OCI-LY7 (cell line): ENCODE measurements at regions of chr19 and their contacts with region 1.

Region 1: GRCh38 chr19:34336781-34337271 is 28.2 kb upstream of the GPI start:
- DNase-seq: peak; percentile 75
- H3K4me3 ChIP-seq: no peak overlapping the region
- H3K27ac ChIP-seq: peak overlapping the region; percentile 4
- H3K4me1 ChIP-seq: peaks cover 9% of the 10 kb centered on the region
- CTCF ChIP-seq: peak; percentile 92

Region 2: DNA sequence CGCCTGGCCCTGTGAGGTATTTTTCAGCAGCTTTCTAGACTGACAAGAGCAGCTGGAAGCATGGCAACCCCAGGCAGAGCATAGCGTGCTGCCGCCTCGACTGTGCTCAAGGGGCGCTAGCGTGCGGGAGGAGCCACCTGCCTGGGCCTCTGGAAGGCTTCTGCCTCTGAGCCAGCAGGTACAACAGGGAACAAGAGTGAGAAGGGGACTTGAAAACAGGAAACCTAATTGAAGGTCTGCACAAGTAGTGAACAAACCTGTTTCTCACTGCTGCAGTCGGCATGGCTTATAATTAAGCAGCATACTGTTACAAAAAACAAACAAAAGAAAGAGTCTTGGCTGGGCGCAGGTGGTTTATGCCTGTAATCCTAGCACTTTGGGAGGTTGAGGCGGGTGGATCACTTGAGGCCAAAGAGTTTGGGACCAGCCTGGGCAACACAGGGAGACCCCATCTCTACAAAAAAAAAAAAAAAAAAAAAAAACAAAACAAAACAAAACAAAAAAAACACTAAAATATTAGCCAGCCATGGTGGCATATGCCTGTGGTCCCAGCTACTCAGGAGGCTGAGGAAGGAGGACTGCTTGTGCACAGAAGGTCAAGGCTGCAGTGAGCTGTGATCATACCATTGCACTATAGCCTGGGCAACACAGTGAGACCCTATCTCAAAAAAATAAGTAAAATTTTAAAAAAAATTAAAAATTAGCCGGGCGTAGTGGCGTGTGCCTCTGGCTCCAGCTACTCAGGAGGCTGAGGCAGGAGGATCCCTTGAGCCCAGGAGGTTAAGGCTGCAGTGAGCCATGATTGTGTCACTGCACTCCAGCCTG is 95.1 kb before region 1 on chr19:
- CTCF ChIA-PET with region 1: interaction called, 3 read pairs
- POLR2A ChIA-PET with region 1: no interaction called
- intact Hi-C with region 1: loop called (anchors 1 kb)
- DNase-seq: peak; percentile 89
- H3K4me3 ChIP-seq: no peak overlapping the region
- H3K27ac ChIP-seq: no peak overlapping the region
- H3K4me1 ChIP-seq: peaks cover 6% of the 10 kb centered on the region
- CTCF ChIP-seq: peak; percentile 88

Region 3: GRCh38 chr19:34317311-34317927 is 19.4 kb before region 1 on chr19:
- CTCF ChIA-PET with region 1: interaction called, 3 read pairs
- POLR2A ChIA-PET with region 1: interaction called, 3 read pairs
- intact Hi-C with region 1: loop called (anchors 1 kb)
- DNase-seq: peak; percentile 20
- H3K4me3 ChIP-seq: no peak overlapping the region
- H3K27ac ChIP-seq: peak overlapping the region; percentile 14
- H3K4me1 ChIP-seq: peaks cover 55% of the 10 kb centered on the region
- CTCF ChIP-seq: no peak